PC-9 (cell line): ENCODE measurements at regions of chr9 and their contacts with region 1.

Region 1: DNA sequence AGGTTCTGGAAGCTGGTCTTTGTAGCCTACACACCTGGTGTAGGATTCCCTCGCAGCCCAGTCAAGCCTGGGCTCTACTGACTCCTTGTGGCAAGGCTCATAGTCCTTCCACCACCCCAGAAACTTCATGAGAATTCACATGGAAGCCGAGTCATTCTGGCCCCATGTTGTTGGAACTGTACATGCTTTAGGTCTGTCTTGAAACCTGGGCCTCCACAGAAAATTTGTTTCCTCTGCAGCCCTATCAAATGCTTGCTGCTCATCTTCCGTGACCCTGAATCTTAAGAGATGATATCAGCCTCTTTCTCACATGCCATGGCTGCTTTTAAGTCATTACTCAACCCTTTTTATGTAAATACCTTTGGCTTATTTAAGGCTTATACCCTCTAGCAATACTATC is 113.4 kb upstream of the GRHPR start:
- DNase-seq: no peak
- H3K4me3 ChIP-seq: no peak overlapping the region
- H3K27ac ChIP-seq: no peak overlapping the region
- H3K4me1 ChIP-seq: no peaks in the 10 kb centered on the region
- H3K27me3 ChIP-seq: no peaks in the 10 kb centered on the region
- CTCF ChIP-seq: no peak

Region 2: DNA sequence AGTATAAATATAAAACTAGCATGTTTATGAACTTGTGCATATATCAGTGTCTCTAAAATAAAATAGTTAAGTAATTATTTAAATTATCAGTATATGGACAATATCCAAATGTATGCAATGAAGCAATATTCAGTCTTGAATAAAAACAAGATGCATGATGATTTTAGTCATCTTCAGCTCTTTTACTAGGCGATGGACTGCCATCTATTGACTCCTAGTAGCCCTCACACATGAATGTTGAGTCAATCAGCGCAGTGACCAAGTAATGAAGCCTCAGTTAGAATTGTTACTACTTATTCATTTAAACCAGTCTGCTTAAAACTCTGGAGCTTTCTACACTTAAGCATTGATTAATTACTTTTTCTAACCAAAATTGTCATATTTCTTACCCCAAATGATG is 20.4 kb after region 1 on chr9:
- CTCF ChIA-PET with region 1: interaction called, 23 read pairs
- POLR2A ChIA-PET with region 1: no interaction called
- intact Hi-C with region 1: no loop called
- DNase-seq: no peak
- H3K4me3 ChIP-seq: no peak overlapping the region
- H3K27ac ChIP-seq: no peak overlapping the region
- H3K4me1 ChIP-seq: no peaks in the 10 kb centered on the region
- H3K27me3 ChIP-seq: no peaks in the 10 kb centered on the region
- CTCF ChIP-seq: 0 out of 2 replicates have a peak, but pooled peaks have one; percentile 7

Region 3: GRCh38 chr9:37938121-37938891 is 629.2 kb after region 1 on chr9:
- CTCF ChIA-PET with region 1: no interaction called
- POLR2A ChIA-PET with region 1: no interaction called
- intact Hi-C with region 1: loop called (anchors 5 kb)
- DNase-seq: peak; percentile 31 to 66
- H3K4me3 ChIP-seq: no peak overlapping the region
- H3K27ac ChIP-seq: peak overlapping the region; percentile 35
- H3K4me1 ChIP-seq: peaks cover 50% of the 10 kb centered on the region
- H3K27me3 ChIP-seq: no peaks in the 10 kb centered on the region
- CTCF ChIP-seq: no peak